Mammary epithelial cell (primary cell): ENCODE measurements at regions of chr6 and their contacts with region 1.

Region 1: GRCh38 chr6:84774157-84774984 is 10.0 kb upstream of the TBX18 start:
- DNase-seq: peak; percentile 47
- H3K4me3 ChIP-seq: peak overlapping the region in 1 of 3 experiments; percentile 33
- H3K27ac ChIP-seq: no peak overlapping the region
- H3K4me1 ChIP-seq: peaks cover 13% of the 10 kb centered on the region
- H3K27me3 ChIP-seq: peaks cover 47% of the 10 kb centered on the region
- CTCF ChIP-seq: peak; percentile 37 to 62

Region 2: DNA sequence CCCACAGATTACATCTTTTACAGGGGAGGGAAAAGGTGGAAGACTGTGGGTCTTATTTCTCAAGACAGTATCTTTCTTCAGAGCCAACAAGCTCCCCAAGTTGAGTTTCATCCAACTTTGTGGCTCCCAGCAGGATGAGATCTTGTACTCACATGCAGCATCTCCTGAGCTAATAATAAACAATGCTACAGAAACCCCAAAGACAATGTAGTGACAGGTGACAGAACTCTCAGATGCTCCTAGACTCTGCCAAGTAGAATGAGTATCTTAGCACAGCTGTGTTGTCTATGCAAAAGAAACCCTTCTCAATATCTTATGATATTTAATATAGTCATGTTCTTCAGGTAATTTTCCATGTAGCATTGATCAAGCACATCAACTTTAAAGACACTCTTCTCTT is 100.0 kb before region 1 on chr6:
- CTCF ChIA-PET with region 1: no interaction called
- dilution Hi-C with region 1: no loop called
- in situ Hi-C with region 1: no loop called
- intact Hi-C with region 1: no loop called
- DNase-seq: no peak
- H3K4me3 ChIP-seq: no peak overlapping the region
- H3K27ac ChIP-seq: no peak overlapping the region
- H3K4me1 ChIP-seq: no peaks in the 10 kb centered on the region
- H3K27me3 ChIP-seq: no peaks in the 10 kb centered on the region
- CTCF ChIP-seq: no peak

Region 3: GRCh38 chr6:84685983-84686584 is 88.3 kb before region 1 on chr6:
- CTCF ChIA-PET with region 1: interaction called, 23 read pairs
- dilution Hi-C with region 1: no loop called
- in situ Hi-C with region 1: no loop called
- intact Hi-C with region 1: no loop called
- DNase-seq: peak; percentile 6
- H3K4me3 ChIP-seq: no peak overlapping the region
- H3K27ac ChIP-seq: no peak overlapping the region
- H3K4me1 ChIP-seq: no peaks in the 10 kb centered on the region
- H3K27me3 ChIP-seq: no peaks in the 10 kb centered on the region
- CTCF ChIP-seq: peak; percentile 57 to 61

Region 4: GRCh38 chr6:84728598-84728997 is 45.8 kb before region 1 on chr6:
- CTCF ChIA-PET with region 1: interaction called, 8 read pairs
- dilution Hi-C with region 1: no loop called
- in situ Hi-C with region 1: no loop called
- intact Hi-C with region 1: loop called (anchors 1 kb)
- DNase-seq: peak; percentile 45
- H3K4me3 ChIP-seq: no peak overlapping the region
- H3K27ac ChIP-seq: no peak overlapping the region
- H3K4me1 ChIP-seq: peaks cover 7% of the 10 kb centered on the region
- H3K27me3 ChIP-seq: peaks cover 3% of the 10 kb centered on the region
- CTCF ChIP-seq: peak; percentile 55 to 74